OCI-LY7 (cell line): ENCODE measurements at regions of chr2 and their contacts with region 1.

Region 1: GRCh38 chr2:158745044-158745865 is 49.9 kb upstream of the DAPL1 start:
- DNase-seq: peak; percentile 56
- H3K4me3 ChIP-seq: no peak overlapping the region
- H3K27ac ChIP-seq: no peak overlapping the region
- H3K4me1 ChIP-seq: no peaks in the 10 kb centered on the region
- CTCF ChIP-seq: peak; percentile 75

Region 2: GRCh38 chr2:158179660-158180059 is 565.6 kb before region 1 on chr2:
- CTCF ChIA-PET with region 1: interaction called, 3 read pairs
- POLR2A ChIA-PET with region 1: no interaction called
- intact Hi-C with region 1: loop called (anchors 2 kb)
- DNase-seq: peak; percentile 9
- H3K4me3 ChIP-seq: no peak overlapping the region
- H3K27ac ChIP-seq: no peak overlapping the region
- H3K4me1 ChIP-seq: no peaks in the 10 kb centered on the region
- CTCF ChIP-seq: peak; percentile 69